ENCODE measurements at regions of chr17 and their contacts with region 1.

Region 1: GRCh38 chr17:9090641-9091096 is 69.4 kb downstream of the NTN1 start:
- DNase-seq: no peak

Region 2: GRCh38 chr17:9021158-9021991 is 69.3 kb before region 1 on chr17 and contains the start of gene NTN1:
- intact Hi-C with region 1: loop called in 1 of 2 experiments (anchors 10 kb)
- DNase-seq: peak; percentile 84
- total RNA-seq, gene NTN1: 6.9 to 15.4 TPM

Measured in posterior vena cava (tissue), 2 donors.